BJ (cell line): ENCODE measurements at regions of chr1 and their contacts with region 1.

Region 1: GRCh38 chr1:2133039-2133878 is 61.3 kb downstream of the FAAP20 start:
- DNase-seq: peak; percentile 93
- H3K4me3 ChIP-seq: peak overlapping the region; percentile 38
- H3K27me3 ChIP-seq: no peaks in the 10 kb centered on the region
- CTCF ChIP-seq: no peak

Region 2: GRCh38 chr1:2189459-2190425 is 56.5 kb after region 1 on chr1:
- CTCF ChIA-PET with region 1: interaction called, 16 read pairs
- POLR2A ChIA-PET with region 1: no interaction called
- DNase-seq: peak; percentile 79
- H3K4me3 ChIP-seq: peak overlapping the region; percentile 41
- H3K27me3 ChIP-seq: no peaks in the 10 kb centered on the region
- CTCF ChIP-seq: no peak